Stomach (tissue), 19 donors: ENCODE measurements at regions of chr15 and their contacts with region 1.

Region 1: GRCh38 chr15:20340931-20341661 is 200.5 kb downstream of the GOLGA6L6 start:
- DNase-seq: peak; percentile 25 to 67
- H3K4me3 ChIP-seq: no peak overlapping the region
- H3K27ac ChIP-seq: no peak overlapping the region
- H3K4me1 ChIP-seq: no peaks in the 10 kb centered on the region
- H3K27me3 ChIP-seq: no peaks in the 10 kb centered on the region
- CTCF ChIP-seq: peak in 1 of 7 experiments; percentile 17
- EP300 ChIP-seq: no peak
- POLR2A ChIP-seq: no peak

Region 2: GRCh38 chr15:20106026-20106425 is 235.1 kb before region 1 on chr15:
- intact Hi-C with region 1: no loop called
- DNase-seq: peak; percentile 0 to 26
- H3K4me3 ChIP-seq: no peak overlapping the region
- H3K27ac ChIP-seq: no peak overlapping the region
- H3K4me1 ChIP-seq: no peaks in the 10 kb centered on the region
- H3K27me3 ChIP-seq: no peaks in the 10 kb centered on the region
- CTCF ChIP-seq: no peak
- EP300 ChIP-seq: no peak
- POLR2A ChIP-seq: no peak

Region 3: DNA sequence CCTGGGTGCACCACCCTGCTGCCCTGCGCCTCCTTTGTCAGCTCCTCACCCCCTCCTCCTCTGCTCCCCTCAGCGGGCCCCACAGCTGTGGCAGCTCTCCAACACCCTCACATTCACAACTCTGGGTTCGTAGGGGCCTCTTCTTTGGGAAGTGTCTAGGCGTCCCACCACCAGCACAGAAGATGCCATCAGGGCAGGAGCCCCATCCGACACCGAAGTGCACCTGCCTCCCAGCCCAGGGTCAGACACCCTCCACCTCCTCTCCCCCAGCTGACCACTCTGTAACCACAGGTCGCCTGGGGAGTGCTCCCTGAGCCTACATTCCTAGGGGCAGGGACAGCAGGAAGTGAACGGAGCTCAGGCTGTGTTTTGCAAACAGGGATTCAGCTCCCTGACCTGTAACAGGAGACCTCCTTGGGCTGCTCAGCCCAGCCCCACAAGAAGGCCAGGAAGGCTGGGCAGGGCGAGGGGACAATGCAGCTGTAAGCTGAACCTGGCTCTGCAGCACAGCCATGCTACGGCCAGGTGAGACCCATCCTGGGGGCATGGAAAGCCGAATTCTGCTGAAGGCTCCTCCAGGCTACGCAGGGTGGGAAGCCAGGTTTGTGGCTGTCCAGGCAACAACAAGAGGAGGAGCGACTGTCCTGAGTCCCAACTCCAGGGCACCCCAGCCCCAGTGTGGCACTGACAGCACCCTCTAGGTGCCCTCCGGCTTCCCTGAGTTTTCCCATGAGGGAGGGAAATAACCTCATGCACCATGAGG is 68.5 kb before region 1 on chr15:
- intact Hi-C with region 1: no loop called
- DNase-seq: no peak
- H3K4me3 ChIP-seq: no peak overlapping the region
- H3K27ac ChIP-seq: no peak overlapping the region
- H3K4me1 ChIP-seq: no peaks in the 10 kb centered on the region
- H3K27me3 ChIP-seq: peaks cover 0 to 10% (median 0%) of the 10 kb centered on the region in 3 donors
- CTCF ChIP-seq: no peak
- EP300 ChIP-seq: no peak
- POLR2A ChIP-seq: no peak

Region 4: DNA sequence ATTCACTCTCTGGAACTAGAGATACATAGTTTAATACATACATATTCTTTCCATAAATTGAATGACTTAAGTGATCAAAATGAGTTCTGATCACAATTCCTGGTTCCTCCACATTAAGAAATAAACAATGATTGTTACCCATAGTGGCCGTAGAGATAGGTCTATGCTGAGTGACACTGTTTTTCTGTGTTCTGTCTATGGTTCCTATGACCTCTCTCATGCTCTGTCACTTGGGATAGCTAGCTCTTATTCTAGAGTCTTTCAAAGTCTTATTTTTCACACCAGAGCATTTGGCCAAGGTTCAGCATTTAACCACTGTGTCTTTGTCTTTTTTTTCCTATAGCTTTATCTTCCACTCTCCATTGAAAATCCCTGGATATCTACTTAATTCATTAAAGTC is 68.2 kb after region 1 on chr15:
- intact Hi-C with region 1: no loop called
- DNase-seq: no peak
- H3K4me3 ChIP-seq: no peak overlapping the region
- H3K27ac ChIP-seq: no peak overlapping the region
- H3K4me1 ChIP-seq: peaks cover 0 to 4% (median 0%) of the 10 kb centered on the region in 4 donors
- H3K27me3 ChIP-seq: no peaks in the 10 kb centered on the region
- CTCF ChIP-seq: no peak
- EP300 ChIP-seq: no peak
- POLR2A ChIP-seq: no peak

Region 5: DNA sequence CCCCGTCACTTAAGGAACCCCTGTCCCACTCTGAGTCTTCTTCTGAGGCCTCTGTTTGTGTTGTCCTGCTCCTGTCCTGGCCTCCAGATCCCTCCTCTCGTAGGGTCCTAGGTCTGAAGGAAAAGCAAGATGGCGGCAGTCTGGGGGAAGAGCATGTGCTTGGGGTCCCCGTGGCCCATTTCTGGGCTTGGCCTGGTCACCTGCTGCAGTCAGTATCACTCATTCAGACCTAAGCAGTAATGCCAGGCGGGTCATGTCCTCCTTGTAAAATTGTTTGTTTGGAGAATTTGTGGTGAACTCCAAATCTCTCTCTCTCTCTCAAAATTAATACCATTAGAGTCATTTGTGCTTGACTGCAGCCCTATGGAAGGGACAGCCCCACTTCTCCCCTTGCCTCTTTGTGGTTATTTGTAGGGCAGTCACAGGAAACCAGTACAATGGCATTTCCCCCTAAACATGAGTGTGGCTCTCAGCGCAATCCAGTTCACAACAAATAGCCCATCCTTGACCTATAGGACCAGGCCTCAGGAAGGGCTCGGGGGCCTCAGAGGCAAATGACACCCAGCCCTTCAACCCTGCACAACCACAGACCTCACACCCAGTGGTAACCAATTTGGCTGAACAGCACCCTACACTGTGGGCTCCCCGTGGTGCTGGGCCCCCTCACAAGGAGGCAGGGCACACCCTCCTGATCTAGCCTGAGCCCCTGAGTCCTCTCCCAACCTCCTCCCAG is 1912.7 kb after region 1 on chr15:
- intact Hi-C with region 1: loop called (anchors 10 kb)
- DNase-seq: no peak
- H3K4me3 ChIP-seq: no peak overlapping the region
- H3K27ac ChIP-seq: no peak overlapping the region
- H3K4me1 ChIP-seq: no peaks in the 10 kb centered on the region
- H3K27me3 ChIP-seq: peaks cover 0 to 11% (median 0%) of the 10 kb centered on the region in 3 donors
- CTCF ChIP-seq: no peak
- EP300 ChIP-seq: no peak
- POLR2A ChIP-seq: no peak